ENCODE measurements at regions of chr5 and their contacts with region 1.

Region 1: DNA sequence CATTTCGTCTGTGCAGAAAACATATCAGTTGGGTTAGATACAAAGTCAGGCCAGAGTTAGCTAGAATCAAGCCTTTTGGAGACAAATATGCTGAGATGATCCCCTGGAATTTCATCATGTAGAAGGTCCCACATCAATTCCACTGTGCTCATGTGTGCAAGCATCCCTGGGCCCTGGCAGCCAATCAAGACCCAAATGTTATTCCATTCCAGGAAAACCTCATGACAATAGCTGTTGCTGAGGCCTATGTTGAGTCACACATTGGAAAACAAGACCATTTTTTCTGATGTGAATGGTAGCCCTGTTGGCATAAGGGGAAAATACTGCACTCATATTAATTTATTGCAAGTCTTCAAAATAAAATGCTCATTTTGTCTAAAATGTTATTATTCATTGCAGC is 11.5 kb downstream of the SPOCK1 start:
- DNase-seq: peak; percentile 87
- H3K4me3 ChIP-seq: no peak overlapping the region
- H3K27ac ChIP-seq: peak overlapping the region; percentile 77
- H3K4me1 ChIP-seq: peaks cover 28% of the 10 kb centered on the region
- H3K27me3 ChIP-seq: no peaks in the 10 kb centered on the region
- CTCF ChIP-seq: no peak
- POLR2A ChIP-seq: no peak

Region 2: GRCh38 chr5:137361280-137361679 is 126.3 kb before region 1 on chr5:
- CTCF ChIA-PET with region 1: no interaction called
- POLR2A ChIA-PET with region 1: no interaction called
- dilution Hi-C with region 1: no loop called
- intact Hi-C with region 1: loop called (anchors 1 kb)
- DNase-seq: peak; percentile 94
- H3K4me3 ChIP-seq: no peak overlapping the region
- H3K27ac ChIP-seq: peak overlapping the region; percentile 100
- H3K4me1 ChIP-seq: peaks cover 40% of the 10 kb centered on the region
- H3K27me3 ChIP-seq: no peaks in the 10 kb centered on the region
- CTCF ChIP-seq: no peak
- POLR2A ChIP-seq: peak; percentile 53

Region 3: DNA sequence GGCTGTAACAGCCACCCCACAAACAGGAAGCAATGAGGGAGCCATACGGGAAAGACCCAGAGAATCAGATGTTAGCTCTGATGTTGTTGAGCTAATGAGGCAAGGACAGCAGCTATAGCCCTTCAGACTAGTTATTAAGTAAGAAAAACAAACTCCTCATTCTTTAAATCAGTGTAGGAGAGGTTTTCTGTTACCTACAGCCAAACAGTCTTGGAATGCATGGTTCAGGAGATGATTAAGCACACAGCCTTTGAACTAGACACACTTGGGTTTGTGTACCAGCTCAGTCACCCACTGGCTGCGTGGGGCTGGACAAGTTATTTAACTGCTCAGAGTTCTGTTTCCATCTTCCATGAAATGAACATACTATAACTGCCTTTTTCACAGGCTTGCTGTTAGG is 56.5 kb before region 1 on chr5:
- CTCF ChIA-PET with region 1: no interaction called
- POLR2A ChIA-PET with region 1: no interaction called
- dilution Hi-C with region 1: no loop called
- intact Hi-C with region 1: no loop called
- DNase-seq: no peak
- H3K4me3 ChIP-seq: no peak overlapping the region
- H3K27ac ChIP-seq: no peak overlapping the region
- H3K4me1 ChIP-seq: peaks cover under 1% of the 10 kb centered on the region
- H3K27me3 ChIP-seq: no peaks in the 10 kb centered on the region
- CTCF ChIP-seq: no peak
- POLR2A ChIP-seq: no peak

Region 4: DNA sequence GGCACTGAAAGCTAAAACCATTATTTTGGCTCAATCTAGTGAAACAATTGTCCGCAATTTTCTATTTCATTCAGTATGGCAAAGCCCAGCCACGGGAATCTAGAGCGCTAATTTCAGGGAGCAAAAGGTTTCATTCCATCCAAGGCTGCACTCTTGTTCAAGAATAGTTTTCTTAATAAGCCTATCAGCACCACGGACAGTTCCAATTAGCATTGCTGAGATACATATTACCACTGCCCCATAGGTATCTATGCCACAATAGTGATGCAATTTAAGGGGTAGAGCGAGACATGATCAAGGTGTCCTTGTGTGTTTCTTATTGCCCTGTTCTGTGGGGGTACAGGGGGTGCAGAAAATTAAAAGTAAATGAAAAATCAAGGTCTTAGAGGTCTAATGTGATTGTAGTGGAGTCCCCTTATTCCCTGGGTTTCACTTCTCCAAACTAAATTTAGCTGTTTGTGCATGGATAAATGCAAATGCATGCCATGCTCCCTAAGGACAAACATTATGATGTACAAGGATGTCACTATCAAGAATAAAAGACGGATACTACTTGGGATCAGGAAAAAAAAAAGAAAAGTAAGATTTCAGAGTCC is 34.0 kb before region 1 on chr5:
- CTCF ChIA-PET with region 1: no interaction called
- POLR2A ChIA-PET with region 1: no interaction called
- dilution Hi-C with region 1: no loop called
- intact Hi-C with region 1: no loop called
- DNase-seq: peak; percentile 46
- H3K4me3 ChIP-seq: no peak overlapping the region
- H3K27ac ChIP-seq: no peak overlapping the region
- H3K4me1 ChIP-seq: no peaks in the 10 kb centered on the region
- H3K27me3 ChIP-seq: no peaks in the 10 kb centered on the region
- CTCF ChIP-seq: no peak
- POLR2A ChIP-seq: no peak

Region 5: GRCh38 chr5:137470111-137470920 is 17.3 kb before region 1 on chr5:
- CTCF ChIA-PET with region 1: no interaction called
- POLR2A ChIA-PET with region 1: no interaction called
- dilution Hi-C with region 1: no loop called
- intact Hi-C with region 1: loop called (anchors 2 kb)
- DNase-seq: peak; percentile 88
- H3K4me3 ChIP-seq: no peak overlapping the region
- H3K27ac ChIP-seq: peak overlapping the region; percentile 78
- H3K4me1 ChIP-seq: peaks cover 31% of the 10 kb centered on the region
- H3K27me3 ChIP-seq: no peaks in the 10 kb centered on the region
- CTCF ChIP-seq: no peak
- POLR2A ChIP-seq: peak; percentile 33